ENCODE measurements at regions of chr10 and their contacts with region 1.

Region 1: GRCh38 chr10:72692057-72692910 is at the start of gene MCU:
- DNase-seq: no peak
- ATAC-seq: peak; percentile 93
- H3K4me3 ChIP-seq: peak within 1 kb of the TSS; percentile 90
- H3K27ac ChIP-seq: peak within 1 kb of the TSS; percentile 50
- H3K4me1 ChIP-seq: peaks cover 10% of the 10 kb centered on the region
- H3K27me3 ChIP-seq: no peaks in the 10 kb centered on the region
- CTCF ChIP-seq: no peak
- EP300 ChIP-seq: no peak
- POLR2A ChIP-seq: peak; percentile 86
- RAD21 ChIP-seq: no peak
- polyA plus RNA-seq, gene MCU: 5.1 to 7.6 TPM

Region 2: GRCh38 chr10:72375585-72375984 is 316.7 kb before region 1 on chr10:
- CTCF ChIA-PET with region 1: interaction called, 11 read pairs
- POLR2A ChIA-PET with region 1: no interaction called
- RAD21 ChIA-PET with region 1: interaction called, 3 read pairs
- SMC1A ChIA-PET with region 1: interaction called, 3 read pairs
- in situ Hi-C with region 1: no loop called
- intact Hi-C with region 1: no loop called
- DNase-seq: no peak
- ATAC-seq: peak; percentile 76
- H3K4me3 ChIP-seq: no peak overlapping the region
- H3K27ac ChIP-seq: no peak overlapping the region
- H3K4me1 ChIP-seq: no peaks in the 10 kb centered on the region
- H3K27me3 ChIP-seq: no peaks in the 10 kb centered on the region
- CTCF ChIP-seq: peak; percentile 14 to 37 (median 26); a peak in 4 of 6 replicates
- EP300 ChIP-seq: no peak
- POLR2A ChIP-seq: no peak
- RAD21 ChIP-seq: peak; percentile 50

Region 3: DNA sequence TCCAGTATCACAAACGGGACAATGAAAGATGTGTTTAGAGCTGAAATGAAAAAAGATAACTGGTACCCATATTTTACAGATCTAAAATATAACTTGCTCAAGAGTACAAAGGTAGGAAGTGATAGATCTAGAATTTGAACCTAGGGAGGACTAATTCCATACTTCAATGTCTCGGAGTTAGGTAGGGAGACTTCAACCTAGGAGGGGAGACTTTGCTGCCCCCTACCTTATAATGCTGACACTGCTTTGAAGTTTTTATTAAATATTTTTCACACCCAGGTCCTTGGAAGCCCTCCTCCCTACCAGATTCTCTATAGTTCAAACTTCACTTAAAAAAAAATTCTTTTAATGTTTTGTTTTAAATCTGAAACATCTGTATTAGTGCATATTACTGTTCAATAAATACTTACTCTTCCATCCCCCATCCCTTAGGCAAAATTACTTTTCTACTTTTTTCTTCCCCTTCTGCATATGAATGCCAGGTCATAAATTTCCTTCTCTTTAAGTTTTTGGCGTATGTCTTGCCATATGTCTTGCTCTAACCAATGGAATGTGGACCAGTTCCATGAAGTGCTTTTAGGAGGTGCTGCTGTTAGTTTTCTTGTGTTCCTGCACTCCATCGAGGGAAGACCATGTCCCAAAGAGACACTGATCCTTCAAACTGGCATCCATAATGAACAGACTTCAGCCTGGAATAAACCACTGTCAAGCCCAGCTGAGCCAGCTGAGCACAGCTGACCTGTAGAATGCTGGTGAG is 124.2 kb before region 1 on chr10:
- CTCF ChIA-PET with region 1: interaction called, 3 read pairs
- POLR2A ChIA-PET with region 1: no interaction called
- RAD21 ChIA-PET with region 1: no interaction called
- SMC1A ChIA-PET with region 1: no interaction called
- in situ Hi-C with region 1: no loop called
- intact Hi-C with region 1: loop called (anchors 10 kb)
- DNase-seq: no peak
- ATAC-seq: peak; percentile 52; the same call in 2 of the 3 replicates
- H3K4me3 ChIP-seq: no peak overlapping the region
- H3K27ac ChIP-seq: no peak overlapping the region
- H3K4me1 ChIP-seq: peaks cover 4% of the 10 kb centered on the region; the same call in 1 of the 2 replicates
- H3K27me3 ChIP-seq: no peaks in the 10 kb centered on the region
- CTCF ChIP-seq: peak; percentile 41 to 57 (median 51)
- EP300 ChIP-seq: no peak
- POLR2A ChIP-seq: no peak
- RAD21 ChIP-seq: peak; percentile 63

Region 4: DNA sequence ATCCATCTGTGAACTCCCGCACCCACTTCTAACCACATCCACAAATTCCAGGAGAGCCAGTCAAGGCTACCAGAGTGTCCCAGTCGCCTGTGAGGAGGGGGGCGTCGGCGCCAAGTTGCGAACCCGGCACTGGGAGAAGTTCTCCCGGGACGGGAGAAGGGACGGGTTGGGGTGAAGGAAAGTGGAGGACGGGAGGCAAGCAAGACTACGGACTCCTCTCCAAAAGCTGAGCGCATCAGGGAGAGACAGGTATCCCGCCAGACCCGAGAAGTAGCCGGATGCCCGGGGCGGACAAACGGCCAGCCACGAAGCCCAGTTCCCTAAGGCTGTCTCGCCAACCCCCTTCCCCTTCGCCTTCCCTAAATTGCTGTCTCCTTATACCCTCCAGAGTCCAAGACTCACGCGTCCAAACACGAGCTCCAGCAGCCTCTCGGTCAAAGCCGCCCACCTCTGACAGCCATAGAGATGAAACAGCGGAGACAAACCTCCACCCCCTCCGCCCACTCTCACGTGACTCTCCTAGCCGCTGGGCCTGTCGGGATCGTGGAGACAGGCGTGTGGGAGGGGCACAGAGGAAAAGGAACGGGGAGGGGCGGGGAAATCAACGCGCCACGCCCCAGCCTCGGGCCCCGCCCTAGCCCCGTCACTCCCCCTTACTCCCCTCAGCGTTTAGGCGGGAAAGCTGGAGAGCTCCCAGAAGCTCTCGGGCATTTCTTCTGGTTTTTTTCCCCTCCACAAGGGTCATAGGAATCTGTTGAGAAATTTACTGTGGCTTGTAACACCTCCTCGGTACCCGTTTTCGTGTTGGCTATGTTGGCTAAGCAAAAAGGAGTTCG is 66.5 kb before region 1 on chr10 and contains the start of gene MICU1:
- CTCF ChIA-PET with region 1: interaction called, 12 read pairs
- POLR2A ChIA-PET with region 1: interaction called, 9 read pairs
- RAD21 ChIA-PET with region 1: interaction called, 7 read pairs
- SMC1A ChIA-PET with region 1: interaction called, 5 read pairs
- in situ Hi-C with region 1: no loop called
- intact Hi-C with region 1: no loop called
- DNase-seq: peak; percentile 86
- ATAC-seq: peak; percentile 99
- H3K4me3 ChIP-seq: peak within 1 kb of the TSS; percentile 96
- H3K27ac ChIP-seq: peak within 1 kb of the TSS; percentile 74
- H3K4me1 ChIP-seq: no peaks in the 10 kb centered on the region
- H3K27me3 ChIP-seq: no peaks in the 10 kb centered on the region
- CTCF ChIP-seq: no peak
- EP300 ChIP-seq: no peak
- POLR2A ChIP-seq: peak; percentile 91
- RAD21 ChIP-seq: no peak
- polyA plus RNA-seq, gene MICU1: 18.2 to 21.9 TPM

Region 5: DNA sequence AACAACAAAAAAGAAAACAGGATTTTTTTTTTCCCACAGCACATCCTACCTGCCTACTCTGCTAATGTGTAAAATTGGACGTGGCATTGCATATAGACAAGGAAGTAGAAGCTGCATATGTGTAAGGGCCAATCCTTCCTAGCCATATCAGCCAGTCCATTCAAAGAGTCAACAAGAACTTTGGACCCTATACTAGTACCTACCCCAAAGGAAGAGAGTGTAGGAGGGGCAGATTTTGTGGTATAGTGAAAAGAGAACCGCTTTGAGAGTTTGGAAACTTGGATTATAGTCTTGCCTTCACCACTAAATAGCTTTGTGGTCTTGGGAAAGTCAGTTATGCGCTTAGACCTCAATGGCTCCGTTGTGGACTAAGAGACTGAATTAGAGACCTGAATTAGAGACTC is 12.4 kb before region 1 on chr10:
- CTCF ChIA-PET with region 1: interaction called, 14 read pairs
- POLR2A ChIA-PET with region 1: interaction called, 8 read pairs
- RAD21 ChIA-PET with region 1: interaction called, 5 read pairs
- SMC1A ChIA-PET with region 1: interaction called, 10 read pairs
- in situ Hi-C with region 1: no loop called
- intact Hi-C with region 1: no loop called
- DNase-seq: no peak
- ATAC-seq: no peak
- H3K4me3 ChIP-seq: no peak overlapping the region
- H3K27ac ChIP-seq: no peak overlapping the region
- H3K4me1 ChIP-seq: 0 out of 2 replicates have a peak, but pooled peaks cover 3% of the 10 kb centered on the region
- H3K27me3 ChIP-seq: no peaks in the 10 kb centered on the region
- CTCF ChIP-seq: no peak
- EP300 ChIP-seq: no peak
- POLR2A ChIP-seq: no peak
- RAD21 ChIP-seq: no peak

Region 6: DNA sequence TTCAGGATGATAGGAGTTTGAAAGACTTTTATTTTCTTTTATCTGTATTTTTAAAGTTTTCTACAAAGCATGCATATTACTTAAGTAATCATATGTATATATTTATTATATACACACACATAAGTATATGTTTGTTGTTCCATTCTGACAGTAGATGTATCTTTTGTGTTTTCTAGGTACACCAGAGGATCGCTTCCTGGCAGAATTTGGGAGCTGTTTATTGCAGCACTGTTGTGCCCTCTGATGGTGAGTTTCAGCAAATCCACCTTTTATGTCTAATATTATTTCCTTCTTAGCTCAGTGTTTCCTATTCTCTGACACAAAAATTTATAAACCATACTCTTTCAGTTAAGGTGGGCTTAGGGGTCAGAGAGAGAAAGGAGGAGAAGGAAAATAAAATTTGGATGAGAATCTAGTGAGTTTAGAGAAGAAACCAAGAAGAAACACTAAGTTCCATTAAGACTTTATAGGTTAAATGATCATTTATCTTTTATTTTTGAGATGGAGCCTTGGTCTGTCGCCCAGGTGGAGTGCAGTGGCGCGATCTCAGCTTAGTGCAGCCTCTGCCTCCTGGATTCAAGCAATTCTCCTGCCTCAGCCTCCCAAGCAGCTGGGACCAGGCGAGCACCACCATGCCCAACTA is 142.0 kb after region 1 on chr10:
- CTCF ChIA-PET with region 1: interaction called, 46 read pairs
- POLR2A ChIA-PET with region 1: interaction called, 4 read pairs
- RAD21 ChIA-PET with region 1: interaction called, 15 read pairs
- SMC1A ChIA-PET with region 1: interaction called, 13 read pairs
- in situ Hi-C with region 1: no loop called
- intact Hi-C with region 1: loop called (anchors 2 kb)
- DNase-seq: peak; percentile 28
- ATAC-seq: peak; percentile 66
- H3K4me3 ChIP-seq: no peak overlapping the region
- H3K27ac ChIP-seq: no peak overlapping the region
- H3K4me1 ChIP-seq: no peaks in the 10 kb centered on the region
- H3K27me3 ChIP-seq: no peaks in the 10 kb centered on the region
- CTCF ChIP-seq: peak; percentile 40 to 73 (median 56); a peak in 5 of 6 replicates
- EP300 ChIP-seq: no peak
- POLR2A ChIP-seq: no peak
- RAD21 ChIP-seq: peak; percentile 86

Region 7: GRCh38 chr10:73039635-73040034 is 347.4 kb after region 1 on chr10:
- CTCF ChIA-PET with region 1: no interaction called
- POLR2A ChIA-PET with region 1: no interaction called
- RAD21 ChIA-PET with region 1: no interaction called
- SMC1A ChIA-PET with region 1: no interaction called
- in situ Hi-C with region 1: no loop called
- intact Hi-C with region 1: no loop called
- DNase-seq: no peak
- ATAC-seq: no peak
- H3K4me3 ChIP-seq: no peak overlapping the region
- H3K27ac ChIP-seq: no peak overlapping the region
- H3K4me1 ChIP-seq: no peaks in the 10 kb centered on the region
- H3K27me3 ChIP-seq: no peaks in the 10 kb centered on the region
- CTCF ChIP-seq: no peak
- EP300 ChIP-seq: no peak
- POLR2A ChIP-seq: no peak
- RAD21 ChIP-seq: no peak

Measured in GM12878 (cell line).